ENCODE measurements at regions of chr5 and their contacts with region 1.

Region 1: DNA sequence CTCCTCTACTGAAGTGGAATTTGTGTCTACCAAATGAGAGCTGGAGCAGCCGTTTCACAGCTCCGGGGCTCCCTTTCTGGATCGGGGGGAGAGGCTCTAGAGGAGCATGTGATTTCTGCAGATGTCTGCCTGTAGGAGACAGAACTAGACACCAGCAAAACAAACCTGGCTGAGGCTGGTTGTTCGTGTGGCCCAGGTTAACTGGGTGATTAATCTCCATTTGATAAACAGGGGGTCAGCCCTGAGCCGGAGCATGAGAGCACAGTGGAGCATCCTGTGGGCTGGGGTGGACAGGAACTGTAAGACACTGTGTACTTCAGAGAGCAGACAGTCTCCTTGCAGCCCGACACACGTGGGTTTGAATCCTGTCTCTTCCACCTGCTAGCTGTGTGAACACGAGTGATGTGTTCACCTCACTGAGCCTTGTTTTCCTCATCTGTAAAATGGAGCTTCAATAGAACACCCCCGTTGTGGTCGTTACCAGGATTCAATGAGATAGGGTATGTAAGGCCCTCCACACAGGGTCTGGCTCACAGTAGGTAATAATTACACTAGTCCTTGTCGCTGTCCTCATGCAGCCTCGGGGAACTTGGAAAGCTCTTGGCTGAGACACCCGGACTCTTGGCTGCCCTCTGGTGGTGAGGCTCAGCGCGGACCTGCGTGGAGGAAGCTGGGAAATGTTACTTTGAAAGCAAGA is 12.9 kb downstream of the CXCL14 start:
- DNase-seq: peak; percentile 66 to 85 (median 78)
- H3K4me3 ChIP-seq: no peak overlapping the region
- H3K27ac ChIP-seq: no peak overlapping the region
- H3K4me1 ChIP-seq: peaks cover 0 to 2% (median under 1%) of the 10 kb centered on the region in 4 experiments
- H3K27me3 ChIP-seq: peaks cover 0 to 13% (median 2%) of the 10 kb centered on the region in 5 experiments

Region 2: GRCh38 chr5:135488727-135489465 is 77.0 kb before region 1 on chr5:
- CTCF ChIA-PET with region 1: interaction called, 11 read pairs
- POLR2A ChIA-PET with region 1: no interaction called
- DNase-seq: no peak
- H3K4me3 ChIP-seq: peak overlapping the region in 3 of 7 experiments; percentile 15 to 52 (median 38)
- H3K27ac ChIP-seq: no peak overlapping the region
- H3K4me1 ChIP-seq: peaks cover 0 to 38% (median 28%) of the 10 kb centered on the region in 4 experiments
- H3K27me3 ChIP-seq: peaks cover 0 to 92% (median 45%) of the 10 kb centered on the region in 5 experiments

Region 3: DNA sequence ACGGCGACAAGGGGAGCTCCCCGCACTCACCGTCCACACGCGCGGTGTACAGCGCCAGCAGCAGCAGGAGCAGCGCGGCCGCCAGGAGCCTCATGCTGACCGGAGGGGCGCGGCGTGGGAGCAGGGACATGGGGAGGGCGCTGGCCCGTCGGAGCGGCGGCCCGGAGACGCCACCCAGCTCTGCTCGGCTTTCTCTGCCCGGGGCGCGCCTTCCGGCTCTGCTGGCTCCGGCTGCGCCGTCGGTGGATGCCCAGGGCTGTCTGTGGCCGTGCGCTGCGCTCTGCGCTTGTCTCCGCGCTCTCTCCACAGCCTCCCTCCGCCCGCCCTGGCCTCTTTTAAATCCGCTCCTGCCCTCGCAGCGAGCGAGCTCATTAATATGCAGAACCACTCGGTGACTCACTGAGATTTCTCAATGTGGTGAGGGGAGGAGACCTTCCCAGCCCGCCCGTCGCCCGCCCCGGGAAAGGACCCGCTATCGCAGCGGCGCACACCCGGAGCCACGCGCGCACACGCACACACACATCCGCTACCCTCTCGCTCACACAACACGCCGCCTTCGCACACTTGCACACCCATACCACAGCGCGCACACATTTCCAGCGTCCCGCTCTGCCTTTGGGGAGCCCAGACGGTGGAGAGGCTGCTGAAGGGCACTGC is 12.9 kb after region 1 on chr5 and contains the start of gene CXCL14:
- CTCF ChIA-PET with region 1: interaction called, 70 read pairs
- POLR2A ChIA-PET with region 1: no interaction called
- DNase-seq: peak; percentile 69 to 89 (median 84)
- H3K4me3 ChIP-seq: peak within 1 kb of the TSS in 3 of 7 experiments; percentile 37 to 48 (median 44)
- H3K27ac ChIP-seq: no peak within 1 kb of the TSS
- H3K4me1 ChIP-seq: peaks cover 0 to 14% (median 7%) of the 10 kb centered on the region in 4 experiments
- H3K27me3 ChIP-seq: peaks cover 4 to 80% (median 48%) of the 10 kb centered on the region in 5 experiments

Region 4: DNA sequence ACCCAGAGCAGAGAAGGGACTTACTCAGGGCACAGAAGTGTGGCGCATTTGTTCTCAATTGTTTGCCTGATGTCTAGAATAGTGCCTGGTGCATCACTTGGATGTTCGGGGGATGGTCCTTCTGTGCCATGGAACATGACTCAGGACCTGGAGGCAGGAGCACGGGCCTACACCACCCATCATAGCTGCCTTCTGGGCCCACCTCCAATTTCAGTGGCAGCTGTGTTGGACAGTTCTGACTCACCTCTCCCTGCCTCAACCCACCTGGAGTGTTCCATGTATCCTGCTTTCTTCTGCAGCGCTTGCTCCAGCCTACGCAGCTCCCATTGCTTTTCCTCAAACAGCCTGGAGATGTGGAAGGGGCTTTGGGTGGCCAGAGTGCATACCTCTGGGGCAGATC is 25.4 kb after region 1 on chr5:
- CTCF ChIA-PET with region 1: interaction called, 11 read pairs
- POLR2A ChIA-PET with region 1: no interaction called
- DNase-seq: no peak
- H3K4me3 ChIP-seq: no peak overlapping the region
- H3K27ac ChIP-seq: no peak overlapping the region
- H3K4me1 ChIP-seq: no peaks in the 10 kb centered on the region
- H3K27me3 ChIP-seq: peaks cover 0 to 14% (median 2%) of the 10 kb centered on the region in 5 experiments

Region 5: GRCh38 chr5:135729321-135729786 is 163.5 kb after region 1 on chr5:
- CTCF ChIA-PET with region 1: interaction called, 18 read pairs
- POLR2A ChIA-PET with region 1: no interaction called
- DNase-seq: peak; percentile 13 to 38 (median 35)
- H3K4me3 ChIP-seq: no peak overlapping the region
- H3K27ac ChIP-seq: no peak overlapping the region
- H3K4me1 ChIP-seq: no peaks in the 10 kb centered on the region
- H3K27me3 ChIP-seq: peaks cover 0 to 1% (median 0%) of the 10 kb centered on the region in 5 experiments

Measured in common myeloid progenitor, CD34-positive (primary cell).